ENCODE measurements at regions of chr14 and their contacts with region 1.

Region 1: DNA sequence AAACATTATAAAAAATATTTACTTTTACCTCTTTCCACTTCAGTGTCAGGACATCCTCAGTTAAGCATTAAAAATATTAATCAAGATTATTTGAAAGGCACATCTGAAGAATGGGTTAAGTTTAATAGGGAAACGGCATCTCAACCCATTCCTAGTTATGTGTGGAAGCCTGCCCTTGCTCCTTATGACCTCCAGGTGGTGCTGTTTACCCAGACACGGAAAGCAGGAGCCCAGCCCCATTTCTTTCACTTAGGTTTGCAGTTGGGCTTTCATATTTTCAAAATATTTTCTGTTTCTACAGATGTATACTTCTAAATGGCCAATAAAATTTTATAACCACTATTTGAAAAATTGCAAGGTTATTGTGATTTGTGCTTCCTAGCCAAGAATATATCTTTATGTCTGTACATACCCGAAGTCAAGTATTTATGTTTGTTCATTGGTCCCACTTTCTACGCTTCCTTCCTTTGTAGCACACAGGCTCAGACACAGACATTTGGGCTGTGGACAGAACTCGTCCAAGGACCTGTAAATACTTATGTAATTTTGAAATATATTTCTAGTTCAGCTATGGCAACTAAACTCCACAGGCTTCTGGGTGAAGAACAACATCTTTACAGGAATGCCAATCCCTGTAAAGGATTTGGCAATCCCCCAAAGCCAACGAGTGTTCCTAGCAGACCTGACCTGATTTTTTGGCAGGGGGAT is 247.1 kb downstream of the AKAP6 start:
- DNase-seq: peak; percentile 57
- H3K4me3 ChIP-seq: no peak overlapping the region
- H3K27ac ChIP-seq: no peak overlapping the region
- H3K4me1 ChIP-seq: no peaks in the 10 kb centered on the region
- H3K27me3 ChIP-seq: peaks cover 20 to 41% of the 10 kb centered on the region in 2 experiments
- CTCF ChIP-seq: peak; percentile 87 to 92
- POLR2A ChIP-seq: no peak

Region 2: GRCh38 chr14:32382704-32383103 is 193.5 kb before region 1 on chr14:
- CTCF ChIA-PET with region 1: no interaction called
- POLR2A ChIA-PET with region 1: no interaction called
- dilution Hi-C with region 1: no loop called
- intact Hi-C with region 1: no loop called
- DNase-seq: no peak
- H3K4me3 ChIP-seq: no peak overlapping the region
- H3K27ac ChIP-seq: no peak overlapping the region
- H3K4me1 ChIP-seq: no peaks in the 10 kb centered on the region
- H3K27me3 ChIP-seq: no peaks in the 10 kb centered on the region
- CTCF ChIP-seq: peak in 1 of 2 donors; percentile 13
- POLR2A ChIP-seq: no peak

Region 3: DNA sequence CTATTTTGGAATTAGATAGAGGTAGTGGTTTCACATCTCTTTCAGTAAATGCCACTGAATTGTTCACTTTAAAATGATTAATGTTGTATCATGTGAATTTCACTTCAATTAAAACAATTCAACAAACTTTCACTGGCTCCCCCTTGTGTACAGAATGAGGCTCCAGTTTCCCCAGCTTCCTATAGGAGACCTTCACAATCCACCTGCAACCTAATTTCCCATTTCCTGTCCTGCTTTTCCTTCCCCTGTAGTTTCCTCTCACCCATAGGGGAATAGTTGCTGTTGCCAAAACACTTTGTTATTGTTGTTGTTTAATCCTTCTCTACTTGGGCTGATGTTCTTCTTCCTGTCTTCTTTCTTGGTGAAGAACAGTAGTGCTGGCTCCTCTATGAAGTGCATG is 422.2 kb after region 1 on chr14:
- CTCF ChIA-PET with region 1: no interaction called
- POLR2A ChIA-PET with region 1: no interaction called
- dilution Hi-C with region 1: no loop called
- intact Hi-C with region 1: loop called (anchors 1 kb)
- DNase-seq: peak; percentile 21
- H3K4me3 ChIP-seq: no peak overlapping the region
- H3K27ac ChIP-seq: no peak overlapping the region
- H3K4me1 ChIP-seq: no peaks in the 10 kb centered on the region
- H3K27me3 ChIP-seq: peaks cover 0 to 1% of the 10 kb centered on the region in 2 experiments
- CTCF ChIP-seq: peak; percentile 22 to 49
- POLR2A ChIP-seq: no peak

Region 4: DNA sequence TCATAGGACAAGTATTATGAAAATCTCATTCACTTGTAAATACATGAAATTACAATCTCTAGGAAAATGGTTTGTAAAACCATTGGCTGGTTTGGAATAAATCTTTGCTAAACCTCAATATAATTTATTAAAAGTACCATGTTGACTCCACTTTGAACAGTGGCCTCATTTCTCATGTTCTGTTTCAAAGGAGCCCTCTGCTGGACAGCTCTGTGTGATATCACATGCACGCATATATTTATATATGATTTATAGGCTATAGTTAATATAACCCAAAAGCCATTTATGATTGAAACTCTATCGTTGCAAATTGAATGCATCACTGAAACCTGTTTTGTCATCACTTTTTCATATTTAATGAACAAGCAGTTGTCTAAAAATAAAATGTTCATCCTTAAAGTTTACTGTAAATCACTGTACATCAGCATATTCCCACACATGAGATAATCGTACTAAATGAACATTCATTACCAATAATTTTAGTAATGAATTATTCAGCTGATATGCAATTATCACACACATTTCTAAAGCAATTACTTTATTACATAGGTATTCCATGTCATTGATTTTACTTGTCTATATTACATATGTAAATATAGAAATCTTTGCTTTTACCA is 856.3 kb after region 1 on chr14:
- CTCF ChIA-PET with region 1: no interaction called
- POLR2A ChIA-PET with region 1: no interaction called
- dilution Hi-C with region 1: no loop called
- intact Hi-C with region 1: loop called (anchors 2 kb)
- DNase-seq: peak; percentile 43
- H3K4me3 ChIP-seq: no peak overlapping the region
- H3K27ac ChIP-seq: no peak overlapping the region
- H3K4me1 ChIP-seq: no peaks in the 10 kb centered on the region
- H3K27me3 ChIP-seq: no peaks in the 10 kb centered on the region
- CTCF ChIP-seq: peak; percentile 17 to 33
- POLR2A ChIP-seq: no peak

Region 5: DNA sequence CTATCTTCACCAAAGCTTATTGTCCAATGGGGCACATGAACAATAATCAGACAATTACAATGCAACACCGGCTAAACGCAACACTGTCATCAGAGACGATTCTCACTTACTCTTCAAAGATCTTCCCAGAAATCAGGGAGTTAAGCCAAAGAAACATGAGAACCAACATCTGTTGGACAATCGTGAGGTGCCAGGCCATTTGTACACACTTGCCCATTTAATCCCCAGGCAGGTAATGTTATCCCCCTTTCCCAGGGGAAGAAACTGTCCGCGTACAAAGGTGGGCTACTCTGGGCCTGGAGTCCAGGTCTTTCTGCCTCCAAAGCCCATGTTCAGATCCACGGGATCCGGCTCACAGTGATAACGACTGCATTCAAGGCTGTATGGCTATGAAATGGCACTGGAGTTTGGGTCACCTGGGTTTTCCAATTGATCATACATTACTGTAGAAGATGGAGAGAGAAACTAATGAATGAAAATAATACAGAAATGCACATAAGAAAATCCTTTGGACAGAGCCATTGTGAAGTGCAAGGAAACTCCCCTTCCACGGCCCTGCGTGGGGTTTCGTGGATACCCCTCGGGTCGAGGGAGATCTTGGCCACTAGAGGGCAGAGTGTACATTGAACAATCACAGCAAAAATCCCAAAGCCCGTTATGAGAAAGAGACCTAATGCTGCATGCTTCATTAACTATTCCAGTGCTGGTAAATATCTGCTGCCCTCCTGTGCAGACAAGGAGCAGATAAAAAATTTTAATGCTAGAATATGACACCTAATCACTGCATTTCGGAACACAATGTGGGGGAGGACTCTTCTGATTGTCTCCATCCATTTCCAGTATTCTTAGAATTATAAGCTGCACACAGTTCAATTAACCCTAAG is 1263.2 kb after region 1 on chr14:
- CTCF ChIA-PET with region 1: interaction called, 3 read pairs
- POLR2A ChIA-PET with region 1: no interaction called
- dilution Hi-C with region 1: no loop called
- intact Hi-C with region 1: loop called (anchors 1 kb)
- DNase-seq: peak; percentile 37
- H3K4me3 ChIP-seq: no peak overlapping the region
- H3K27ac ChIP-seq: no peak overlapping the region
- H3K4me1 ChIP-seq: no peaks in the 10 kb centered on the region
- H3K27me3 ChIP-seq: peaks cover 1 to 4% of the 10 kb centered on the region in 2 experiments
- CTCF ChIP-seq: peak; percentile 72 to 77
- POLR2A ChIP-seq: no peak

Region 6: DNA sequence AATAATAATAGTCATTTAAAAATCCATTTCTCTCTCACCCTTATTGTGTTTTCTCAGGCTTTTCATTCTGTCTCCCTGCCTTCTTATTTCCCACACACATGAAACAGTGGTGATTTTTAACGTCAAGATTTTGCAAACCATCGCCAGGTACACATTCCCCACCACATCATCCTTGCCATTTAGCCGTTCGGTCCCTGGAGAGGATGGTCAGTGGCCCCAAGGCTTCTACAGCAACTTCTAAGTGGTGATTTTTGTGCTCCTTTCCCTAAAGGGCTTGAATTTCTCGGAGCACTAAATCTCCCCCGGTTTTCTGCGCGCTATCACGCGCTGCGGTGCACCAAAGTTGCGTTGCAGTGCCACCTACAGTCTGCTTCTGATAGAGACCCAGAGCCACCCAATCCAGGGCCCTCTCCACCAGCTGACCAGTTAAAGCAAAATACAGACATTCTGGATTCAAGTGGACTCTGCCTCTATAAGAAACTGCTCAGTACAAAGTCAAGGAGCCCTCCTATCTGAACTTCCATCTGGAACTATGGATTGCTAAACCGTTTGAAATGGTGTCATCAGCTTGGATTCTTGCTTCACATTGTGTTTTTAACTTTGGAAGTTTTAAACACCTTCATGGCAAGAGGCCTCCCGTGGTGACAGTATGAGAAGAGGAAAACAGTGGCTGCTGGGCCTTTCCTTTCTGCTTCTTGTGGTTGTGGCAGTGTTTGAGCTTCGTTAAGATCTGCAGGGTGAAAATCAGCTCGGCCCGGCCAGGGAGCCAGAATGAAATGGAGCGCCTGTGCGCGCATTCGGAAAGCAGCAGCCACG is 1651.8 kb after region 1 on chr14:
- CTCF ChIA-PET with region 1: interaction called, 4 read pairs
- POLR2A ChIA-PET with region 1: no interaction called
- dilution Hi-C with region 1: no loop called
- intact Hi-C with region 1: loop called (anchors 1 kb)
- DNase-seq: peak; percentile 50
- H3K4me3 ChIP-seq: no peak overlapping the region
- H3K27ac ChIP-seq: no peak overlapping the region
- H3K4me1 ChIP-seq: no peaks in the 10 kb centered on the region
- H3K27me3 ChIP-seq: peaks cover 3 to 4% of the 10 kb centered on the region in 2 experiments
- CTCF ChIP-seq: peak; percentile 74 to 83
- POLR2A ChIP-seq: no peak

Region 7: GRCh38 chr14:34300882-34301734 is 1724.9 kb after region 1 on chr14:
- CTCF ChIA-PET with region 1: interaction called, 5 read pairs
- POLR2A ChIA-PET with region 1: no interaction called
- dilution Hi-C with region 1: no loop called
- intact Hi-C with region 1: loop called (anchors 1 kb)
- DNase-seq: peak; percentile 49
- H3K4me3 ChIP-seq: no peak overlapping the region
- H3K27ac ChIP-seq: no peak overlapping the region
- H3K4me1 ChIP-seq: no peaks in the 10 kb centered on the region
- H3K27me3 ChIP-seq: peaks cover 0 to 2% of the 10 kb centered on the region in 2 experiments
- CTCF ChIP-seq: peak; percentile 43 to 45
- POLR2A ChIP-seq: no peak